GM12878 (cell line): ENCODE measurements at regions of chr18 and their contacts with region 1.

Region 1: DNA sequence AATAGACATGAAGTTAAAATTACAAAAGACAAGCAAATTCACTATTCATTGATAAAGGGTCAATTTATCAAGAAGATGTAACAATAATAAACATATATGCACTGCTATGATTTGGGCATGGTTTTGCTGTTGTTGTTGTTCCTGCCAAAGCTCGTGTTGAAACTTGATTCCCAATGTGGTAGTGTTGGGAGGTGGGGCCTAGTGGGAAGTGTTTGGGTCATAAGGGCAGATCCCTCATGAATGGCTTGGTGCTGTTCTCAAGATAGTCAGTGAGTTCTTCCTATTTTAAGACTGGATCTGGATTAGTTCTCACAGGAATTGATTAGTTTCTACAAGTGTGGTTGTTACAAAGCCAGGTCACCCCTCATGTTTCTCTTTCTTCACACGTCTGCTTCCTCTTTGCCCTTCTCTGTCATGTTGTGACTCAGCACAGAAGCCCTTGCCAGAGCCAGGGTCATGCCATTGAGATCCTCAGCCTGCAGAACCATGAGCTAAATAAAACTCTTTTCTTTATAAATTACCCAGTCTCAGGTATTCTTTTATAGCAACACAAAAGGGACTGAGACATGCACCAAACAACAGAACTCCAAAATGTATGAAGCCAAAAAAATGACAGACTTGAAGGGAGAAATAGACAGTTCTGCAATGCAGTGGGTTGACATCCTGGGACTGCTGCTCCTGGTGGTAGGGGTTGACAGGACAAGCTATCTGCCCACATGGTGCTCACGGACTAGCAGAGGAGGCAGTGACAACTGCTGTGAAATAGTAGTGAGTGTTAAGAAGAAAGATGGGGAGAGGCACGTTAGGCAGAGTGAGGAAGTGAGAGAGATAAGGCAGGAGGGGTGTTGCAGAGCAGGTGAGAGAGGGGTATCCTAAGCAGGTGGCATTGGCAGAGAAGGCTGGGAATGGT is 18.6 kb upstream of the SKA1 start:
- DNase-seq: peak; percentile 79
- ATAC-seq: peak; percentile 93
- H3K4me3 ChIP-seq: no peak overlapping the region
- H3K27ac ChIP-seq: peak overlapping the region; percentile 86
- H3K4me1 ChIP-seq: peaks cover 15% of the 10 kb centered on the region
- H3K27me3 ChIP-seq: no peaks in the 10 kb centered on the region; a peak in 1 of 4 replicates
- CTCF ChIP-seq: peak; percentile 18 to 50 (median 41); a peak in 5 of 6 replicates
- EP300 ChIP-seq: peak; percentile 21 to 39; a peak in 2 of 4 replicates
- POLR2A ChIP-seq: no peak
- RAD21 ChIP-seq: peak; percentile 50

Region 2: DNA sequence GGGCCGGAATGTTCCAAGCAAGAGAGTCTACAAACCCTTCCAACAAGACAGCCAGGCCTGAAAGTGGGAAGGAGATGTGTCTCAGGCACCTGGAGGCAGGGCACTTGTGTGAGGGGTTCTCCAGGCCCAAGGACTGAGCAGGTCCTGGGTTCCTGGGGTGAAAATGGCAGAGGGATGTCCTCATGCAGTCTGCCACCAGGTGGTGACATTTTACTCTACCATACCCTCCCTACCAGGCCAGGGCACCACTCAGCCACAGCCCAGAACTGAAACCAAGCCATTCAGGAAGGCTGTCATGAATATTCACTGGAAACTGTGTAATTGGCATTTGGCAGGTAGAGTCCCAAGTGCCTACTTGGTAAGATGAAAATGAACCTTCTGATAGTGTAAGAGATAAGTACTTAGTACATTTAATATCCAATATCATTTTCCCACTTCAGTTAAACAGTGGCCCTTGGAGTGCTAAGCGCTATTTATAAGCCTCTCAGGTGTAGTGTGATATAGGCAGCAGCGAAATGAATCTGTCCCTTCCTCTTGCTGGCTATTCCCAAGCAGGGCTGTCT is 346.4 kb before region 1 on chr18:
- CTCF ChIA-PET with region 1: interaction called, 20 read pairs
- POLR2A ChIA-PET with region 1: no interaction called
- RAD21 ChIA-PET with region 1: interaction called, 8 read pairs
- SMC1A ChIA-PET with region 1: interaction called, 5 read pairs
- in situ Hi-C with region 1: no loop called
- intact Hi-C with region 1: loop called (anchors 2 kb)
- DNase-seq: peak; percentile 25
- ATAC-seq: peak; percentile 99
- H3K4me3 ChIP-seq: no peak overlapping the region
- H3K27ac ChIP-seq: no peak overlapping the region
- H3K4me1 ChIP-seq: no peaks in the 10 kb centered on the region
- H3K27me3 ChIP-seq: no peaks in the 10 kb centered on the region
- CTCF ChIP-seq: peak; percentile 69 to 73 (median 72); a peak in 5 of 6 replicates
- EP300 ChIP-seq: no peak
- POLR2A ChIP-seq: no peak
- RAD21 ChIP-seq: peak; percentile 63

Region 3: DNA sequence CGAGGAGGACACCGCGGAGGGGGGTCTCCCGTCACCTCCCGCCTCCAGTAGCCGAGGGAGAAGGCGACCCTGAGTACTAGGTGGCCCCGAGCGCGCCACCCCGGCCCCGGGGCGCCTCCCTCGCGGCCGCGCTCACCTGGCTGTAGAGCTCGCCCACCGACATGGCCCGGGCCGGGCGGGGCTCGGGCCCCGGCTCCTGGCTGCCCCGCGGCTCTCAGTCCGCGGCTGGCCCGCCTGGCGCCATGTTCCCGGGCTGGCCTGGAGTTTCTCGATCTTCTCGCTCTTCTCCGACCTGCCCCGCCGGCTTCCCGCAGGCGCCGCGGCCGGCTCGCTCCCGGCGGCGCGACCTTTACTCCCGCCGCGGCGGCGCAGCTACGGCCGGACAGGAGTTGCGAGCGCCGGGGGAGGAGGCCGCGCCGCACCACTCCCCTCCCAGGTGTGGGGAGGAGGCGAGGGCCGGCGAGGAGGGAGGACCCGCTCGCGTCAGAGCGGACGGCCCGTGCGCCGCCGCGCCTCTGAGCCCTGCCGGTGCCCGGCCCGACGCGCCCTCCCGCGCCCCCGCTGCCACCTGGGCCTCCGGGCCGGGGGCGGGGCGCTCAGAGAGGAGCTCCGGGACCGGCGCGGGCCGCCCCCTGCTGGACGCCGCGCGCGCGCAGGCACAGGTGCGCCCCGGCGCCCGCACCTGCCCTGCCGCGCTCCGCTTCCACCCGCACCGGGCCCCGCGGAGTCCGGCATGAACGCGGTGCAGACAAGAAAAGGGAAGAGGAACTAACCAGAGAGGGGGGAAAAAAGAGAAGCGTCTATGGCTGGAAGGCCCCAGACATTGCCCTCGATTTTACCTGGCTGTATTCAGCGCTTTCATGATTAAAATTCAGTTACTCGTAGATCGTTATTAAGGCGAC is 161.4 kb before region 1 on chr18 and contains the start of gene MYO5B:
- CTCF ChIA-PET with region 1: interaction called, 16 read pairs
- POLR2A ChIA-PET with region 1: interaction called, 5 read pairs
- RAD21 ChIA-PET with region 1: interaction called, 29 read pairs
- SMC1A ChIA-PET with region 1: interaction called, 17 read pairs
- in situ Hi-C with region 1: no loop called
- intact Hi-C with region 1: loop called (anchors 5 kb)
- DNase-seq: no peak
- ATAC-seq: peak; percentile 84
- H3K4me3 ChIP-seq: peak within 1 kb of the TSS; percentile 57; the same call in 1 of the 2 replicates
- H3K27ac ChIP-seq: no peak within 1 kb of the TSS
- H3K4me1 ChIP-seq: no peaks in the 10 kb centered on the region
- H3K27me3 ChIP-seq: peaks cover 6 to 10% of the 10 kb centered on the region in 2 experiments; a peak in 3 of 4 replicates
- CTCF ChIP-seq: peak; percentile 32 to 52 (median 39); a peak in 5 of 6 replicates
- EP300 ChIP-seq: no peak
- POLR2A ChIP-seq: no peak
- RAD21 ChIP-seq: peak; percentile 61
- polyA plus RNA-seq, gene MYO5B: 2.8 to 4.4 TPM

Region 4: GRCh38 chr18:50266248-50266704 is 90.0 kb before region 1 on chr18 and contains the start of gene CFAP53:
- CTCF ChIA-PET with region 1: interaction called, 101 read pairs
- POLR2A ChIA-PET with region 1: interaction called, 10 read pairs
- RAD21 ChIA-PET with region 1: interaction called, 51 read pairs
- SMC1A ChIA-PET with region 1: interaction called, 85 read pairs
- in situ Hi-C with region 1: no loop called
- intact Hi-C with region 1: loop called (anchors 1 kb)
- DNase-seq: peak; percentile 57
- ATAC-seq: peak; percentile 90
- H3K4me3 ChIP-seq: peak within 1 kb of the TSS; percentile 63
- H3K27ac ChIP-seq: peak within 1 kb of the TSS; percentile 83
- H3K4me1 ChIP-seq: peaks cover 22% of the 10 kb centered on the region
- H3K27me3 ChIP-seq: no peaks in the 10 kb centered on the region; a peak in 1 of 4 replicates
- CTCF ChIP-seq: no peak
- EP300 ChIP-seq: no peak
- POLR2A ChIP-seq: peak; percentile 64
- RAD21 ChIP-seq: no peak
- polyA plus RNA-seq, gene CFAP53: 0.05 to 0.06 TPM

Region 5: GRCh38 chr18:50307738-50308470 is 48.4 kb before region 1 on chr18:
- CTCF ChIA-PET with region 1: interaction called, 83 read pairs
- POLR2A ChIA-PET with region 1: interaction called, 32 read pairs
- RAD21 ChIA-PET with region 1: interaction called, 125 read pairs
- SMC1A ChIA-PET with region 1: interaction called, 145 read pairs
- in situ Hi-C with region 1: no loop called
- intact Hi-C with region 1: no loop called
- DNase-seq: peak; percentile 73
- ATAC-seq: peak; percentile 88
- H3K4me3 ChIP-seq: peak overlapping the region; percentile 52; the same call in 1 of the 2 replicates
- H3K27ac ChIP-seq: peak overlapping the region; percentile 66
- H3K4me1 ChIP-seq: peaks cover 34% of the 10 kb centered on the region
- H3K27me3 ChIP-seq: no peaks in the 10 kb centered on the region
- CTCF ChIP-seq: no peak
- EP300 ChIP-seq: no peak
- POLR2A ChIP-seq: no peak; the same call in none of the 2 replicates
- RAD21 ChIP-seq: no peak

Region 6: DNA sequence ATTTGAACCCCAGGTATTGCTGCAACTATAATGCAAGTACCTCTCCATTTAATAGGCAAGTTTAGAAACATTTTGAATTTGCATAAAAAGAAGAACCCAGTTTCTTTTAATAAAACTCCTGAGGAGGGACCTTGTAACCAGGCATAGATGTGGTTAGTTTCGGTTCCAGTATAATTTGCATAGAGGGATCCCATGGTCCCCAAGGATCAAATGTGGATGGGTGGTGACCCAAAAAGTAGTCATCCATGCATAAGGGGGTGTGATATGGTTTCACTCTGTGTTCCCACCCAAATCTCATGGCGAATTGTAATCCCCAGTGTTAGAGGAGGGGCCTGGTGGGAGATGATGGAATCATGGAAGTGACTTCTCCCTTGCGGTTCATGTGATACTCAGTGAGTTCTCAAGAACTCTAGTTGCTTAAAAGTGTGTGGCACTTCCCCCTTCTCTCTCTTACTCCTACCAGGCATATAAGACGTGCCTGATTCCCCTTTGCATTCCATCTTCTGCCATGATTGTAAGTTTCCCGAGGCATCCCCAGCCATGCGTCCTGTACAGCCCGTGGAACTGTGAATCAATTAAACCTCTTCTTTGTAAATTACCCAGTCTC is 21.6 kb before region 1 on chr18:
- CTCF ChIA-PET with region 1: interaction called, 22 read pairs
- POLR2A ChIA-PET with region 1: interaction called, 9 read pairs
- RAD21 ChIA-PET with region 1: interaction called, 23 read pairs
- SMC1A ChIA-PET with region 1: interaction called, 66 read pairs
- in situ Hi-C with region 1: no loop called
- intact Hi-C with region 1: no loop called
- DNase-seq: peak; percentile 71
- ATAC-seq: peak; percentile 78
- H3K4me3 ChIP-seq: peak overlapping the region; percentile 2; the same call in 1 of the 2 replicates
- H3K27ac ChIP-seq: peak overlapping the region; percentile 31
- H3K4me1 ChIP-seq: peaks cover 49% of the 10 kb centered on the region
- H3K27me3 ChIP-seq: no peaks in the 10 kb centered on the region
- CTCF ChIP-seq: no peak
- EP300 ChIP-seq: peak; percentile 43 to 66; a peak in 3 of 4 replicates
- POLR2A ChIP-seq: no peak
- RAD21 ChIP-seq: no peak

Region 7: DNA sequence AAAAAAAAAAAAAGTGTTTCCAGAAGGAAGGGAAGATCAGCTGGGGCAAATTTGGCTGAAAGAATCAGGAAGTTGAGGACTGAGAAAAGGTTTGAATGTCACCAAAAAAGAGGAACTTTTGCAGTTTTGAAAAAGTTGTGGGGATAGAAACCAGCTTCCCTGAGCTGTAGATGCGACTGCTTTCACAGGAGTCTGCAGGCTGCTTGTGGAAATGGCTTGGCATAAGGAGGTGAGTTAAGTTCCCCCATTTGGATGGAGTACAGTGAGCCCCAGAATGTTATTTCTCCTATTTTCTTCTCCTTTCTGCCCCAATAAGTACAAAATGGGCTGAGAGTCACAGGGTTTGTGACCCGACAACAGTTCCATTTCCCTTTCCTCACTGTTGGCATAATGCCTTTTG is 506.1 kb after region 1 on chr18:
- CTCF ChIA-PET with region 1: no interaction called
- POLR2A ChIA-PET with region 1: no interaction called
- RAD21 ChIA-PET with region 1: no interaction called
- SMC1A ChIA-PET with region 1: no interaction called
- in situ Hi-C with region 1: no loop called
- intact Hi-C with region 1: no loop called
- DNase-seq: no peak
- ATAC-seq: no peak
- H3K4me3 ChIP-seq: no peak overlapping the region
- H3K27ac ChIP-seq: no peak overlapping the region; the same call in 1 of the 2 replicates
- H3K4me1 ChIP-seq: peaks cover 12% of the 10 kb centered on the region
- H3K27me3 ChIP-seq: no peaks in the 10 kb centered on the region
- CTCF ChIP-seq: no peak
- EP300 ChIP-seq: no peak
- POLR2A ChIP-seq: no peak
- RAD21 ChIP-seq: no peak